Endothelial cell of umbilical vein (primary cell): ENCODE measurements at regions of chr12 and their contacts with region 1.

Region 1: DNA sequence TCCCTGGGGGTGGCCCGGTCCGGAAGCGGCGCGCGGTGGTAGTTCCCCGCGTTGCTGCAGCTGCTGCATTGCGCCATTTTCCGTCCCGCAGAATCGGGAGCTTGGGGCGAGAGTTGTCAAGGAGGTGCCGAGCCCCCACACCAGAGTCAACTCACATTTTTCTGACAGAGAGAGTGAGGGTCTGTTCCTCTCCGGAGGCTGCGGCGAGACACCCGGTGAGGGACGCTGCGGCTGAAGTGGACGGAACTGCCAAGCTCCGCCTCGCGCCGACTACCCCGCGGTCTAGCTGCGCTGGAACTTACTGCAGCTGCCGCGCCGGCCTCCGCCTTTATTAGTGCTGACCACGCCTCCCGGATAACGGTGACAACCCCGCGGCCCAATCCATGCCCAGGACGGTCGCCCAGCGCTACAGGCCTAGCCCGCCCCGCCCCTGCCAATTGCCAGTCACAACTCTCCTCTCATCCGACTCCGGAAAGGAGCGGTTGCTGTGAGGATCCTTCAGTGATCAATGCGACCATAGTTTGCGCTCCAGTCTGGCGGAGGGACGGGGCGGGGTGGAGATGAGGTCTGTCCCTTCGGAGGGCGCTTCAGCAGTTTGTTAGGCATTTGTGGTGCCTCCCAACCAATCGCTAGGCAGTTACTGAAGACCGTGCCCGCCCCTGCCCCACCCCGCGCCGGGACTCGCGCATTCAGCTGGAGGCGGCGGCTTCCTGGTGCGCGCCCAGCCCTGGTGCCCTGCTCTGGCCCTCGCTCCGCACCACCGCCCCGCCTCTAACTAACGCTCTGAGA is at the start of gene VAMP1:
- DNase-seq: peak; percentile 97
- H3K4me3 ChIP-seq: peak within 1 kb of the TSS; percentile 67 to 84 (median 71)
- H3K27ac ChIP-seq: peak within 1 kb of the TSS; percentile 49
- H3K4me1 ChIP-seq: peaks cover 16% of the 10 kb centered on the region
- H3K27me3 ChIP-seq: peaks cover 0 to 5% of the 10 kb centered on the region in 2 experiments
- CTCF ChIP-seq: no peak
- POLR2A ChIP-seq: peak; percentile 99
- total RNA-seq, gene VAMP1: 6.6 and 7.0 TPM in 2 replicates

Region 2: DNA sequence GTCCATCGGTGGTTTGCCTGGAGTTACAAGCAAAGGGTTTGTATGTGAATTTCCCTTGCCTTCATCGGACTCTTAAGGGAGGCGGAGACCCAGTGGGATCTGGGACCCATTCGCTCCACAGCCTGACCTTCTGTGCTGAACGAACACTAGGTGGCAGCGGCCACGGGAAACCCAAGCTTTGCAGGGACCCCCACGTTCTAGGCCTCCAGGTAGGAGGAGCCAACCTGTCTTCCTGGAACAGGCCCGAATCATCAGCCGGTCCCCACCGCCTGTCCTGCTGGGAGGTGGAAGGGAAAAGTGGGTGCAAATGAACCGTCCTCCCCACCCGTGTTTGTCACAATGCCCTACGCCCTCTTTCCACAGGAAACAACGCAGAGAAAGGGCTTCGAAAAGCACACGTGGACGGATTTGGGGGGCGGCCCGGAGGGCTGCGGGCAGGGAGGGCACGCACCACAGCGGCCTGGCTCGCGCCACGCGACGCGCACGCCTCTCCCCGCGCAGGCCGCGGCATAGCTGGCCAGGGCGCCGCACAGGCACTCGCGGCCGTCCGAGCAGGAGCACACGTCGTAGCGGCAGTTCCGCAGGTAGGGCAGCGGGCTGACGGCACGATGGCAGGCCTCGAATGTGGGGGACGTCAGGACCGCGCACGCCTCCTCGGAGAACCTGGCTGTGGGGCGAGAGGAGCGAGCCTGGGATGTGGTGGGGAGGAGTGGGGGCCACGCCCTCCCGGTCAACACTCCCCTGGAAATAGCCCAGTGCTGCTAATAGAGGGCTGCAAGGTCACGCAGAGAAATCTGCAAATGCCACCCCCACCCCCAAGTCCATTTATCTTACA is 413.9 kb before region 1 on chr12:
- CTCF ChIA-PET with region 1: no interaction called
- POLR2A ChIA-PET with region 1: no interaction called
- dilution Hi-C with region 1: no loop called
- intact Hi-C with region 1: no loop called
- DNase-seq: no peak
- H3K4me3 ChIP-seq: no peak overlapping the region
- H3K27ac ChIP-seq: no peak overlapping the region
- H3K4me1 ChIP-seq: peaks cover 38% of the 10 kb centered on the region
- H3K27me3 ChIP-seq: no peaks in the 10 kb centered on the region
- CTCF ChIP-seq: peak; percentile 25 to 52
- POLR2A ChIP-seq: no peak

Region 3: DNA sequence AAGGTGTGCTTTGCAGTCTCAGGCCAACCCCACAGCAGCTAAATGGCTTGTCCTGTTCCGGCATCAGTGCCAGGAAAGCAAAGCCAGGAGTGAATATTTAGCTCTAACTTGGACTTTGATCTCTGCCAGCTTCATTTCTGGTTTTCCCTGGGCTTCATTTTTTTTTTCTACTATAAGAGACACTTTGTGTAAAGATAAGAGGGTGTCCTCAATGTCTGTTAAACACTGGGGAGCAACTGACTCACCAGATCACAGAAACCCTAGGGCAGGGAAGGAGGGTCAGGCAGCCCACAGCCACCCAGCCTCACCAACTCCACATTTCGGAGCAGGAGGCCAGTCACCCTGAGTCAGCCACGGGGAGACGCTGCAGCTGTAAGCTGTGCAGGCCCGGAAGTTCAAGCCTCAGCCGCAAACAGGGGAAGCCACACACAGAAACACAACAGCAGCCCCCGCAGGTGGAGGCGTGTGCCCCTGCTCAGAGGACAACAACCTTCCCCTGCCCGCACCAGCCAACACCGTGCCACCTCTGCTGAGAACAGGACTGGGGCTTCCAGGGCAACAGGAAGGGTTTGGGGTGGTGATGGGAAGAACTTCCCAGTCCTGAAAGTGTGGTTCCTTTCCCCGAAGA is 135.0 kb before region 1 on chr12:
- CTCF ChIA-PET with region 1: interaction called, 58 read pairs
- POLR2A ChIA-PET with region 1: interaction called, 11 read pairs
- dilution Hi-C with region 1: no loop called
- intact Hi-C with region 1: loop called (anchors 5 kb)
- DNase-seq: peak; percentile 85
- H3K4me3 ChIP-seq: peak overlapping the region in 2 of 3 experiments; percentile 1 to 37
- H3K27ac ChIP-seq: peak overlapping the region; percentile 92
- H3K4me1 ChIP-seq: peaks cover 63% of the 10 kb centered on the region
- H3K27me3 ChIP-seq: no peaks in the 10 kb centered on the region
- CTCF ChIP-seq: peak; percentile 70 to 71
- POLR2A ChIP-seq: no peak

Region 4: DNA sequence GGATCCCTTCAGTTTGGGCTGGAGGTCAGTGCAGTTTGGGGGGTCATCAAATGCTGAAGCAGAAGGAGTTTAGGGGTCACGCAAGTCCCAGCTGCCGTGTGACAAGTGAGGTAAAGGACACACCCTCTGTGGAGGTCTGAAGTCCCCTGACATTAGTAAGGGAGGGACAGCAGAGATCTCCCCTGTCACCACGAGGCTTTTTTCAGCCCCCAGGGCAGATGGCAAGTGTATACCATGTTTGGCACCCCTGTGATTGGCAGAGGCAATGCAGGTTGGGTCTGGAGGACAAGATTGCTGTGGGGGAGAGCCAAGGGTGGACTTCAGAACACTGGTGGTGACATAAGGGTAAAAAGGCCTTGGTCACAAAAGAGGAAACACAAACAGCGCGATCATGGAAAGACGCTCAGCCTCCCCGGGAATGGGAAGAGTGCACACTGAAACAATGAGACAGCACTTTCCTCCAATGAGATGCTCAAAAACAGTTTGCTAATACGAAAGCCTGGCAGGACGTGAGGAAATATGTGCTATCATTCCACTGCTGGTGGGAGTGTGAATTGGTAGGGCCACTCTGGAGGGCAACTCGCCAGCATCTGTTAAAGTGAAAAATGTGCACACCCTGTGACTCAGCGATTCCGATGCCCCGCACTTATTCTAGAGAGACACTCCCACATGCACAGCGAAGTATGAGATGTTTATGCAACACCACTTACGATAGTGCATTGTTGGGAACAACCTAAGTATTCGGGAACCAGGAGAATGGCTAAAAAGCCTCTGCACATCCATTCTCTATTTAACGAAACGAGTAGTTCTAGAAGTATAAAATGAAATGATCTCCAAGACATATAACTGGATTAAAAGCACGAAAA is 40.2 kb before region 1 on chr12:
- CTCF ChIA-PET with region 1: interaction called, 147 read pairs
- POLR2A ChIA-PET with region 1: no interaction called
- dilution Hi-C with region 1: no loop called
- intact Hi-C with region 1: no loop called
- DNase-seq: peak; percentile 97
- H3K4me3 ChIP-seq: peak overlapping the region in 1 of 3 experiments; percentile 4
- H3K27ac ChIP-seq: peak overlapping the region; percentile 96
- H3K4me1 ChIP-seq: peaks cover 18% of the 10 kb centered on the region
- H3K27me3 ChIP-seq: no peaks in the 10 kb centered on the region
- CTCF ChIP-seq: no peak
- POLR2A ChIP-seq: peak; percentile 44

Region 5: GRCh38 chr12:6444704-6445688 is 25.6 kb before region 1 on chr12 and contains the start of gene CD27:
- CTCF ChIA-PET with region 1: interaction called, 13 read pairs
- POLR2A ChIA-PET with region 1: interaction called, 3 read pairs
- dilution Hi-C with region 1: no loop called
- intact Hi-C with region 1: no loop called
- DNase-seq: no peak
- H3K4me3 ChIP-seq: no peak within 1 kb of the TSS
- H3K27ac ChIP-seq: no peak within 1 kb of the TSS
- H3K4me1 ChIP-seq: no peaks in the 10 kb centered on the region
- H3K27me3 ChIP-seq: no peaks in the 10 kb centered on the region
- CTCF ChIP-seq: no peak
- POLR2A ChIP-seq: no peak
- total RNA-seq, gene CD27: not detected in 2 replicates

Region 6: DNA sequence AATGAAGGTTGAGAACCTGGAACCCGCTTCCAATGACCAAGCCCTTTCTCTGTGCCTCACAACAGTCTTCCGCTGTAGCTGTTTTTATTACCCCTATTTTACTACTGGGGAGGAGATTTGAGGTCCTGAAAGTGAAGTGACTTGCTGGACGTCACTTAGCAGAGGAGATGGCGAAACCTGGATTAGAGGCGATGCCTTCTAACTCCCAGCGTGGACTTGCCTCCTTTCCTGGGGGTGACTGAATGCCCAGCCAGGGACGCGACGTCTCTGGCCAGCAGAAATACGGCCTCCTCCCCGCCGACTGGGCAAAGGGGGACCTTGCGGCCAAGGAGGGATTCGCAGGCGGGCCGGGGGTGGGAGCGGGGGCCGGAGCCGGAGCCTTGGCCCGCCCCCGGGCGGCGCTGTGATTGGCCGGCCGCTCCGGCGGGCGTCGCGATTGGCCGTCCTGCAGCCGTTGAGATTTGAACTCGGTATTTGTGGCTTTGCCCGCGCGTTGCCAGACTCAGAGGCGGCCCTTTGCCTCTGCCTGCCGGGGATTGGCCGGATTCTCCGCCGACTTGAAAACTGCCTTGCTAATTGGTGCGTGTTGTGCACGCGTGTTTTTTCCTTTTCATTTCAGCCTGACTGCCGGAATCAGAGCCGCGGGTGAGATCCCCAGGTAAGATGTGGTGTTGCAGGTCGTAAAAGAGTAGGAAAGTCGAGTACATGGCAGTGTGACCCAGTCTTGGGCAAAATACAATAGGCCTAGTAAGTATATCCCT is 23.1 kb after region 1 on chr12 and contains the start of gene NCAPD2:
- CTCF ChIA-PET with region 1: interaction called, 8 read pairs
- POLR2A ChIA-PET with region 1: interaction called, 15 read pairs
- dilution Hi-C with region 1: no loop called
- intact Hi-C with region 1: loop called (anchors 1 kb)
- DNase-seq: peak; percentile 98
- H3K4me3 ChIP-seq: peak within 1 kb of the TSS; percentile 82 to 92 (median 86)
- H3K27ac ChIP-seq: peak within 1 kb of the TSS; percentile 95
- H3K4me1 ChIP-seq: peaks cover 20% of the 10 kb centered on the region
- H3K27me3 ChIP-seq: no peaks in the 10 kb centered on the region
- CTCF ChIP-seq: peak; percentile 21 to 35
- POLR2A ChIP-seq: no peak
- total RNA-seq, gene NCAPD2: 77.3 and 90.1 TPM in 2 replicates

Region 7: DNA sequence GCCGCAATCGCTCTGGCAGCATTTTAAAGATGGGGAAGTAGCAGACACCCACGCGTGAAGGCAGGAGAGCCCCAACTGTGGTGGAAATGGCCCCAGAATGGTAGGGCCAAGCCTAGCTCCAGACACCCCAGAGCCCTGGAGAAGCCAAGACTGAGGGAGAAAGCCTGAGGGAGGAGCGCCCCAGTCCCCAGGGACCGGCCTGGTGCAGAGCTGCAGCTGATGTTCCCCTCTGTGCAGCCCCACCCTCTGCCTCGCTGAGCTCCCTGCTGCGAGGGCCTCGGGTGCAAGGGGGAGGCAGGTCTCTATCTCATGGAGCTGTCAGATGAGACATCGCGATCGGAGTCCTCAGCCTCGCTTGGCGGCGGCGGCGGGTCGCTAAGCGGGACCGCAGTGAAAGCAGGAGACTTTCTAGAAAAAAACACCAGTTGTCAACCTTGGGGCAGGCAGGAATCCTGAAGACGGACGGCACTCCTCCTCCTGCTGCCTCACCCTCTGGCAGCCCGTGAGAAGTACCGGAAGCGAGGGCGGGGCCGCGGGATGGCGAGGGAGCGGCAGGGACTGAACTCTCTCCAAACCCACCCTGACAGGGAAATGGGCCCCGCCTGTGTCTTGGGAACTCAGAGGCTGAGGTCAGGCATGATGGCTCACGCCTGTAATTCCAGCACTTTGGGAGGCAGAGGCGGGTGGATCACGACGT is 69.8 kb after region 1 on chr12:
- CTCF ChIA-PET with region 1: interaction called, 61 read pairs
- POLR2A ChIA-PET with region 1: interaction called, 5 read pairs
- dilution Hi-C with region 1: no loop called
- intact Hi-C with region 1: loop called (anchors 1 kb)
- DNase-seq: peak; percentile 73
- H3K4me3 ChIP-seq: no peak overlapping the region
- H3K27ac ChIP-seq: no peak overlapping the region
- H3K4me1 ChIP-seq: peaks cover 39% of the 10 kb centered on the region
- H3K27me3 ChIP-seq: no peaks in the 10 kb centered on the region
- CTCF ChIP-seq: no peak
- POLR2A ChIP-seq: no peak